ENCODE measurements at regions of chr6 and their contacts with region 1.

Region 1: GRCh38 chr6:134145786-134146185 is 93.4 kb upstream of the SLC2A12 start:
- DNase-seq: no peak
- H3K4me3 ChIP-seq: no peak overlapping the region
- H3K27ac ChIP-seq: no peak overlapping the region
- H3K4me1 ChIP-seq: no peaks in the 10 kb centered on the region
- H3K27me3 ChIP-seq: no peaks in the 10 kb centered on the region
- CTCF ChIP-seq: no peak

Region 2: GRCh38 chr6:133748628-133749027 is 397.2 kb before region 1 on chr6:
- CTCF ChIA-PET with region 1: no interaction called
- dilution Hi-C with region 1: no loop called
- in situ Hi-C with region 1: no loop called
- intact Hi-C with region 1: no loop called
- DNase-seq: no peak
- H3K4me3 ChIP-seq: no peak overlapping the region
- H3K27ac ChIP-seq: no peak overlapping the region
- H3K4me1 ChIP-seq: peaks cover 4% of the 10 kb centered on the region
- H3K27me3 ChIP-seq: peaks cover 1% of the 10 kb centered on the region
- CTCF ChIP-seq: no peak

Region 3: GRCh38 chr6:134389129-134389528 is 243.3 kb after region 1 on chr6:
- CTCF ChIA-PET with region 1: no interaction called
- dilution Hi-C with region 1: no loop called
- in situ Hi-C with region 1: no loop called
- intact Hi-C with region 1: no loop called
- DNase-seq: no peak
- H3K4me3 ChIP-seq: no peak overlapping the region
- H3K27ac ChIP-seq: no peak overlapping the region
- H3K4me1 ChIP-seq: peaks cover under 1% of the 10 kb centered on the region
- H3K27me3 ChIP-seq: no peaks in the 10 kb centered on the region
- CTCF ChIP-seq: no peak

Region 4: GRCh38 chr6:134589512-134589911 is 443.7 kb after region 1 on chr6:
- CTCF ChIA-PET with region 1: interaction called, 16 read pairs
- dilution Hi-C with region 1: no loop called
- in situ Hi-C with region 1: no loop called
- intact Hi-C with region 1: no loop called
- DNase-seq: peak; percentile 96
- H3K4me3 ChIP-seq: no peak overlapping the region
- H3K27ac ChIP-seq: peak overlapping the region; percentile 84
- H3K4me1 ChIP-seq: peaks cover 24% of the 10 kb centered on the region
- H3K27me3 ChIP-seq: no peaks in the 10 kb centered on the region
- CTCF ChIP-seq: no peak

Measured in mammary epithelial cell (primary cell).